ENCODE measurements at regions of chr4 and their contacts with region 1.

Region 1: DNA sequence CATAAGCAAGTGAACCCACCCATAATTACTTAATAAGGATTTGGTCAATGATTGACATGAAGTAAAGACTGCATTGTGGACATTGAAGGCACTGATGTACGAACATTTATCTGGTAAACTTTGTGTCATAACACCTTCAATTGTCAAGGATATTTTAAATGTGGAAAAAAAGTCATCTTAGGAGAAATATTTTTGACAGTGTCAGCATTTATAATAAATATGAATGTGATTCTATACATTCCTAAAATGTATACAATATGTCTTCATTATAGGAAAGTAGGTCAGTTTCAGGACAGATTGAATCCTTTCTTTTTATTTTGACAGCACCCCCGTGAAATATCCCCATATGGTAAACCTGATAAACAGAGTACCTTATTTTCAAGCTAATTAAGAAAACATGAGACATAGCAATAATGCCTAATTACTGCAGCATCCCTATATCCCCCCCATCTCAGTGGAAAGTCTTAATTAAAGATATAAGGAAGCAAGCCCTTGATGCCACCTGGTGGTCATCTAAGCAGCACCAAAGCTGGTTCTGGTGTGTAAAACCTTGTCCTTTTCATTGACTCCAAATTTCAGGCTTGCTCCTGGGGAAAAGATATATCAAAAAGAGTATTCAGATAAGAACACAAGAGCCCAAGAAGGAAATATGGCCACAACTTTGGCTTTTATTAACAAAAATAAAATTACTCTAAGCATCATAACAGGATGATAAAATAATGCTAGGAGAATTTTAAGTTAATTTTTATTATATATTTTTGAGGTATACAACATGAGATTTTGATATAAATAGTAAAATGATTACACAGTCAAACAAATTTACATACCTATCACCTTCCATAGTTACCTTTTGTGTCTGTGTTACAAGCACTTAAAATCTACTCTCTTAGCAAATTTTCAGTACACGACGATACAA is 379.7 kb downstream of the TLL1 start:
- DNase-seq: peak; percentile 30 to 32
- H3K4me3 ChIP-seq: no peak overlapping the region
- H3K4me3 Mint-ChIP-seq: no peak overlapping the region
- H3K27ac Mint-ChIP-seq: no peak overlapping the region
- H3K4me1 ChIP-seq: no peaks in the 10 kb centered on the region
- H3K4me1 Mint-ChIP-seq: no peaks in the 10 kb centered on the region
- H3K27me3 ChIP-seq: no peaks in the 10 kb centered on the region
- H3K27me3 Mint-ChIP-seq: no peaks in the 10 kb centered on the region
- CTCF ChIP-seq: peak; percentile 54 to 69

Region 2: DNA sequence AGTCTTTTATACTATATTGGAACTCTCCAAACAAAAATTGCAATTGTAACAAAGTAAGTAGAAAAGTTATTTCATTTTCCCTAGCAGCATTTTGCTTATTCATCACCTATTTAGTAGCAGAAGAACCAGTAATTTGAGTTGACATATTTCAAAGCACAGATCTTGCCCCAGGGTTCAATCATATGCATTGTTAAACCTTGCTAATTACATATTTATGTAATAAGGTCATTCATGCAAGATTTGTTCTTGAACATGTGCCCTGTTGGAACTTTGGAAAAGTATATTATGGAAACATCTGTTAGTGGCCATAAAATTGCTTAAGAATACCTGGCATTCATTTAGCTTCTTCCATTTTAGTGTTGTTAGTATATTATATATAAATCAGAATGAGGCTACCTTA is 188.0 kb before region 1 on chr4:
- CTCF ChIA-PET with region 1: no interaction called
- POLR2A ChIA-PET with region 1: no interaction called
- intact Hi-C with region 1: no loop called
- DNase-seq: no peak
- H3K4me3 ChIP-seq: no peak overlapping the region
- H3K4me3 Mint-ChIP-seq: no peak overlapping the region
- H3K27ac Mint-ChIP-seq: no peak overlapping the region
- H3K4me1 ChIP-seq: no peaks in the 10 kb centered on the region
- H3K4me1 Mint-ChIP-seq: no peaks in the 10 kb centered on the region
- H3K27me3 ChIP-seq: no peaks in the 10 kb centered on the region
- H3K27me3 Mint-ChIP-seq: no peaks in the 10 kb centered on the region
- CTCF ChIP-seq: no peak

Region 3: GRCh38 chr4:166594326-166594946 is 341.7 kb after region 1 on chr4:
- CTCF ChIA-PET with region 1: no interaction called
- POLR2A ChIA-PET with region 1: no interaction called
- intact Hi-C with region 1: loop called (anchors 1 kb)
- DNase-seq: peak; percentile 52 to 55
- H3K4me3 ChIP-seq: no peak overlapping the region
- H3K4me3 Mint-ChIP-seq: no peak overlapping the region
- H3K27ac Mint-ChIP-seq: no peak overlapping the region
- H3K4me1 ChIP-seq: no peaks in the 10 kb centered on the region
- H3K4me1 Mint-ChIP-seq: no peaks in the 10 kb centered on the region
- H3K27me3 ChIP-seq: no peaks in the 10 kb centered on the region
- H3K27me3 Mint-ChIP-seq: no peaks in the 10 kb centered on the region
- CTCF ChIP-seq: peak; percentile 68 to 81